Activated CD8-positive, alpha-beta T cell treated with anti-CD3 and anti-CD28 coated beads for 36 hours (primary cell): ENCODE measurements at regions of chr11 and their contacts with region 1.

Region 1: DNA sequence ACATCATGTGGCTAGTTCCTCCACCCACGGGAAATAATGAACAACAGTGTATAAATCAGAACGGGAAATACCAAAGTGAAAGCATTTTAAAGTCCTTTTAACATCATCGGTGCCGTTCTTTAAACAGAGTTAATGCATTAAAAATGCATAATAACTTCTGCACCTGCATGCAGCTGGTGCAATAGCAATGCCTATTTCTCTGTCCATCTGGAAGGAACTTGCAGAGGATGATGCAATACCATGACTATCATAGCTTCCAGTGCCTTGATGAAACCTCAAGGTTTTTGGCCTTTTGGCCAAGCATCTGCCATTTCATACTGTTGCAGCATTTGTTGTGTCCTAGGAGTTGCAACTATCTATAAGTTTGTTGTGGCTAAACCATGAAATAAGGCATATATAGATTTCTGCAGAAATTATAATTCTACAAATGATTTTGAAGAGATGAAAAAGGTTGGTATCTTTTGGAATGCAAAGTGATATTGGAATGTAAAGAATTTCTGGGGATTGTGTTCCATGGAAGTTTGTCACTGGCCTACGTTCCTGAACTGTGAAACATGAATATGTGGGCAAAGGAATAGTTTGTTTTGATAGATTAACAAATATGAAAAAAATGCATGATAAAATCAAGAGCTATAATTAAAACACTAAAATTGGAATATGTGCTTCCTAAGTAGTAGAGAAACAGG is 9.8 kb upstream of the EIF3F start:
- DNase-seq: no peak
- ATAC-seq: no peak
- H3K4me3 Mint-ChIP-seq: no peak overlapping the region
- H3K27ac Mint-ChIP-seq: no peak overlapping the region
- H3K4me1 Mint-ChIP-seq: no peaks in the 10 kb centered on the region
- H3K27me3 Mint-ChIP-seq: peaks cover 3% of the 10 kb centered on the region
- CTCF ChIP-seq: no peak

Region 2: DNA sequence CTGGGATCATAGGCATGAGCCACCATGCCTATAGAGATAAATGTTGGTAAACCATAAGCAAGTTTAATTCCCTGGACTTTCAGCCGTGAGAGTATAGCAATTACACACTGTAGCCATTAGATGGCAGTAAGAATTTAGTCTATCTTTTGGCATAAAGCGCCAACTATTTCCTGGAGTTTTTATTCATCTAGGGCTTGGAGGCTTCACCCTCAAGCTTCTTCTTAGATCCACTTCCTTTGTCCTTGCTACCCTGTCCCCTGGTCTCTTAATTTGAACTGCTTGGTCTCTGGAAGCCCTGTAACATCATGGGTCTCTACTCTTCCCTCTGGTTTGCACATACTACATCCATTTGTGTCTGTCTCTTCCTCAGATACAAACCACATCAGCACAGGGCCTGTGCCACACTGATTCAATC is 84.5 kb before region 1 on chr11:
- CTCF ChIA-PET with region 1: interaction called, 13 read pairs
- POLR2A ChIA-PET with region 1: no interaction called
- intact Hi-C with region 1: no loop called
- DNase-seq: no peak
- ATAC-seq: peak; percentile 90
- H3K4me3 Mint-ChIP-seq: no peak overlapping the region
- H3K27ac Mint-ChIP-seq: no peak overlapping the region
- H3K4me1 Mint-ChIP-seq: no peaks in the 10 kb centered on the region
- H3K27me3 Mint-ChIP-seq: peaks cover 3% of the 10 kb centered on the region
- CTCF ChIP-seq: peak; percentile 73

Region 3: GRCh38 chr11:8365216-8365941 is 388.0 kb after region 1 on chr11:
- CTCF ChIA-PET with region 1: no interaction called
- POLR2A ChIA-PET with region 1: no interaction called
- intact Hi-C with region 1: no loop called
- DNase-seq: no peak
- ATAC-seq: no peak
- H3K4me3 Mint-ChIP-seq: no peak overlapping the region
- H3K27ac Mint-ChIP-seq: no peak overlapping the region
- H3K4me1 Mint-ChIP-seq: no peaks in the 10 kb centered on the region
- H3K27me3 Mint-ChIP-seq: no peaks in the 10 kb centered on the region
- CTCF ChIP-seq: no peak